Posterior cingulate gyrus (tissue), 11 donors: ENCODE measurements at regions of chr4 and their contacts with region 1.

Region 1: GRCh38 chr4:36351082-36351666 is 69.8 kb downstream of the DTHD1 start:
- DNase-seq: peak; percentile 36 to 93 (median 74)

Region 2: DNA sequence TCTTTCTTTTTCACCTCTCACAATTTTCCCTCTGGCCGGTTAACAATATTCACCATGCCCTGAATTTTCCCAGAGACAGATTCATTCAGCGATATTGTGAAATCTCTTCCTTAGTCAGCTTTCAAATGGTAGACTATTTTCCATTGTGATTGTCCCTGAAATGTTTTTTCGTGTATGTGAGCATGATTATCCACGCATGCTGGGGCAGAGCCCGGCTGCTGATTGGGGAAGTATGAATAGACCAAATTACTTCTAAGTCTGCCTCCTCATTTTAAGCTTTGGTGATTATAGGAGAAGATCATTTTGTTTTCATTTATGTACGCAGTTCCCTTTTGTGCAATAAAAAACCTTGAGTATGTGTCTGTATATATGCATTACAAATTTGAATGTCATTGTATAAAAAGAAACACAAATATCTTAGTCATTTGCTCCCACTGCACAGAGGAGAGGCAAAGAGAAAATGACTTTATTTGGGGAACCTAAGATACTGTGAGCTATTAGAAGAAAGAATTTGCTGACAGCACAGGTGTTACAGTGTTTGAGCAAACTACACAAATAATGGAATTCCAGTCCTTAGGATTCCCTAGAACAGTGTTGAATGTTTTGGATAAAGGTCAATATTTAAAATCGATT is 58.5 kb before region 1 on chr4:
- intact Hi-C with region 1: loop called (anchors 10 kb)
- DNase-seq: peak in 4 of 10 donors; percentile 37 to 87 (median 79)

Region 3: DNA sequence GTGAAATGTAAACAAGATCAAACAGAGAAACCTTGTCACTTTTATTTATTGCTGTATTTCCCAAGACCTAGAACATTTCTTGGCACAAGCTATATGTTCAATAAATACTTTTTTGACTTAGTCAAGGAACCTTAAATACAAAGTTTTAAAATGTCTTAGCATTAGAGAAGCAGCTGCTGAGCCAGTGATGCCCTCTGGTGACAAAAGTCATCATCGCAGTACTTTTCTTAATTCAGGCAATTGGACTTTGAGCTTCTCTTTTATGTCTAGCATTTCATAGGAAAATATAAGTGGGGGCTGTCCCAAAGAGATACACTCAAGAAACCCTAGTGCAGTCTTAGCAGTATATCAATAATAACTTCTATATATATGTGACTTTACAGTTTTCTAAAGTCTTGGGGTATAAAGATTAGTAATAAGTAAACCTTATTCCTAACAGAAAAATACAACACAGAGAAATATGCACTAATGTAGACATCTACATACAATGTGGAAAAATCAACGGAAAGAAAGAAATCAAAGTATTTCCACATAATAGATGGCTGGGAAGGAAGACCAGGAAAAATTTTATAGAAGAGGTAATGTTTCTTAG is 48.7 kb after region 1 on chr4:
- intact Hi-C with region 1: loop called (anchors 2 kb)
- DNase-seq: peak in 4 of 10 donors; percentile 20 to 49 (median 32)

Region 4: DNA sequence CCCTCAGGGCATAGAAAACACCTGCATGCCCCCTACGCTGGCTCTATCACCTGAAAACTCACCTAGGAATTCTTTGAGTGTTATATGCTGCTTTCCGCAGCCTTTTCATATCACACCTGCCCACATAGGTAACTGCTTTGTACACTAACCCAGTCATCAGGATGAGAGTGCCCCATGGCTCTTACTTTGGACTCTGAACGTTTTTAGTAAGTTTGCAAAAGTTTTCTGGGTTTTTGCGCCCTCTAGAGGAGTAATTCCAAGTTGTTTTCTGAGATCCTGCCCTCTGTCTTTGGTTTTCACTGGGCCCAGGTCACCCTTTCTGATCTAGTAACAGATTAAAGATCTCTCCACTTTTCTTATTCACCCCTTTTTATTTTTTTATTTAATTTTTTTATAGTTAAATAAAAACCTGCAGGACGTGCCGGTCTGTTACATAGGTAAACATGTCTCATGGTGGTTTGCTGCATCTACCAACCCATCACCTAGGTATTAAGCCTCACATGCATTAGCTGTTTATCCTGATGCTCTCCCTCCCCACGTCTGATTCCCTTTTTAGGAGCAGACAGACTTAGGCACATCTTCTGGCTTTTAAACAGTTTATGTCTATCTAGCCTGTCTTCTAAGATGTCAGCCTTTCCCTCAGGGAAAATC is 1032.5 kb after region 1 on chr4:
- intact Hi-C with region 1: loop called (anchors 5 kb)
- DNase-seq: no peak

Region 5: GRCh38 chr4:37568481-37568880 is 1217.3 kb after region 1 on chr4:
- intact Hi-C with region 1: loop called (anchors 5 kb)
- DNase-seq: no peak